ENCODE measurements at regions of chr3 and their contacts with region 1.

Region 1: GRCh38 chr3:632572-633170 is 436.1 kb downstream of the CHL1 start:
- DNase-seq: peak; percentile 73
- H3K4me3 Mint-ChIP-seq: no peak overlapping the region
- H3K27ac Mint-ChIP-seq: no peak overlapping the region
- H3K4me1 Mint-ChIP-seq: no peaks in the 10 kb centered on the region
- H3K27me3 Mint-ChIP-seq: no peaks in the 10 kb centered on the region
- CTCF ChIP-seq: peak; percentile 69

Region 2: DNA sequence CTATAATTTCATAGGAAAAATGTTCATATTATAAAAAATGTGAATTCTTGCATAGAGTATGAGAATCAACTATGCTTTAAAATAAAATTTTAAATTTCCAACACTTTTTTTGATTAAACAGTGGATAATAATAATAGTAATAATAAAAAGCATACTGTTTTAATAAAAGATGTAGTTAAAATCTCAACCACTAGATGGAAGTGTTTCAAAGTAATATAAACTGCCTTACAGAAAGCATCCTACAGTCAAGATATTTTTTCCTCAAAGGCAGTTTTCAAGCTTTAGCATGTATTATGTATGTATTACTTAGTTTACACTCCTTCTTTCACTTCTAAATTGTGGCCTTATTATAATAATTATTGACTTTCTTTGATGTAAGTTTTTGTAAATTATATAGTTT is 218.6 kb before region 1 on chr3:
- CTCF ChIA-PET with region 1: interaction called, 3 read pairs
- intact Hi-C with region 1: loop called (anchors 5 kb)
- DNase-seq: no peak
- H3K4me3 Mint-ChIP-seq: no peak overlapping the region
- H3K27ac Mint-ChIP-seq: no peak overlapping the region
- H3K4me1 Mint-ChIP-seq: no peaks in the 10 kb centered on the region
- H3K27me3 Mint-ChIP-seq: no peaks in the 10 kb centered on the region
- CTCF ChIP-seq: peak; percentile 16

Region 3: GRCh38 chr3:481680-482079 is 151.0 kb before region 1 on chr3:
- CTCF ChIA-PET with region 1: no interaction called
- intact Hi-C with region 1: loop called (anchors 5 kb)
- DNase-seq: peak; percentile 6
- H3K4me3 Mint-ChIP-seq: no peak overlapping the region
- H3K27ac Mint-ChIP-seq: no peak overlapping the region
- H3K4me1 Mint-ChIP-seq: no peaks in the 10 kb centered on the region
- H3K27me3 Mint-ChIP-seq: no peaks in the 10 kb centered on the region
- CTCF ChIP-seq: peak; percentile 33

Region 4: GRCh38 chr3:839981-840380 is 207.3 kb after region 1 on chr3:
- CTCF ChIA-PET with region 1: no interaction called
- intact Hi-C with region 1: loop called (anchors 5 kb)
- DNase-seq: no peak
- H3K4me3 Mint-ChIP-seq: no peak overlapping the region
- H3K27ac Mint-ChIP-seq: no peak overlapping the region
- H3K4me1 Mint-ChIP-seq: peaks cover 13% of the 10 kb centered on the region
- H3K27me3 Mint-ChIP-seq: no peaks in the 10 kb centered on the region
- CTCF ChIP-seq: no peak

Region 5: DNA sequence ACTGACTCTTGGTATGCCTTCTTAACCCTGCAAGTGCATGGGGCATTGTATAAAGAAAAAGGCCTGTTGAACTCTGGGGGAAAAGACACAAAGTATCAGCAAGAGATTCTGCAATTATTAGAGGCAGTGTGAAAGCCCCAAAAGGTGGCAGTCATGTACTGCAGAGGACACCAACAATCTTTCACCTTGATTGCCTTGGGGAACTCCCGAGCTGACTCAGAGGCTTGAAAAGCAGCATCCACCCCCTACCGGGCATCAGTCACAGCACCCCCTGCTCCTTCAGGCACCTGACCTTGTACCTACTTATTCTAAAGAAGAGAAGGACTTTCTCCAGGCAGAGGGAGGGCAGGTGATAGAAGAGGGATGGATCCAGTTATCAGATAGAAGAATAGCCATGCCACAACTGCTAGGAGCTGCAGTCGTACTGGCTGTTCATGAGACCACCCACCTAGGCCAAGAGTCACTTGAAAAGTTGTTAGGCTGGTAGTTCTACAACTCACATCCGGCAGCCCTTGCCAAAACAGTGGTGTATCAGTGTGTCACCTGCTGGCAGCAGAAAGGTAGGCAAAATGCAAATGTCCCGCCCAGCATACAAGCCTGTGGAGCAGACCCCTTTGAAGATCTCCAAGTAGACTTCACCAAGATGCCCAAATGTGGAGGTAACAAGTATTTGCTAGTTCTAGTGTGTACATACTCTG is 218.6 kb after region 1 on chr3:
- CTCF ChIA-PET with region 1: no interaction called
- intact Hi-C with region 1: loop called (anchors 1 kb)
- DNase-seq: peak; percentile 71
- H3K4me3 Mint-ChIP-seq: no peak overlapping the region
- H3K27ac Mint-ChIP-seq: no peak overlapping the region
- H3K4me1 Mint-ChIP-seq: peaks cover 12% of the 10 kb centered on the region
- H3K27me3 Mint-ChIP-seq: no peaks in the 10 kb centered on the region
- CTCF ChIP-seq: peak; percentile 36

Region 6: DNA sequence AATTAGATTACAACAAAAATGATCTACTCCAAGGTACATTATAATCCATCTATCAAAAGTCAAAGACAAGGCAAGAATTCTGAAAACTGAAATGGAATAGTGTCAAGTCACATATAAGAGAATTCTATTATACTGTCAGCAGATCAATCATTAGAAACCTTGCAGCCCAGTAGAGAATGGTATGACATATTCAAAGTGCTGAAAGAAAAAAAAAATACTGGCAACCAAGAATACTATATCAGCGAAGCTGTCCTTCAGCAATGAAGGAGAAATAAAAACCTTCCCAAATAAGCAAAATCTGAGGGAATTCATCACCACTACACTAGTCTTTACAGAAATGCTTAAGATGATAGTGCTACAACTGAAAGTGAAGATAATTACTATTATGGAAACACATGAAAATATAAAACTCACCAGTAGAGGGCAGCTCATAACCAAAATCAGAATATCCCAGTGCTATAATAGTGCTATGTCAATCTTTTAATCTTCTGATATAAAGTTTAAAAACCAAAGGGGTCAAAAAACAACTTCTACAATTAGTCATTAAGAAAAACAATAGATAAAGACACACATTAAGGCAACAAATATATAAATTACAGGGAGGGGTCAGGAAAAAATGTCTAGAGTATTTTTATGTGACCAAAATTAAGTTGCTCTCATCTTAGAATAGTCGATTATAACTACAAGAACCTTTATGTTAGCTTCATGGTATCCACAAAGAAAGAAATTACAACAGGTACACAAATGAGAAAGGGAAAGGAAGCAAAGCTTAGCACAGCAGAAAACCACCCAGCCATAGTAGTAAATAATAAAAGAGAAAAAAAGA is 269.5 kb after region 1 on chr3:
- CTCF ChIA-PET with region 1: no interaction called
- intact Hi-C with region 1: loop called (anchors 2 kb)
- DNase-seq: no peak
- H3K4me3 Mint-ChIP-seq: no peak overlapping the region
- H3K27ac Mint-ChIP-seq: no peak overlapping the region
- H3K4me1 Mint-ChIP-seq: no peaks in the 10 kb centered on the region
- H3K27me3 Mint-ChIP-seq: no peaks in the 10 kb centered on the region
- CTCF ChIP-seq: peak; percentile 24

Region 7: DNA sequence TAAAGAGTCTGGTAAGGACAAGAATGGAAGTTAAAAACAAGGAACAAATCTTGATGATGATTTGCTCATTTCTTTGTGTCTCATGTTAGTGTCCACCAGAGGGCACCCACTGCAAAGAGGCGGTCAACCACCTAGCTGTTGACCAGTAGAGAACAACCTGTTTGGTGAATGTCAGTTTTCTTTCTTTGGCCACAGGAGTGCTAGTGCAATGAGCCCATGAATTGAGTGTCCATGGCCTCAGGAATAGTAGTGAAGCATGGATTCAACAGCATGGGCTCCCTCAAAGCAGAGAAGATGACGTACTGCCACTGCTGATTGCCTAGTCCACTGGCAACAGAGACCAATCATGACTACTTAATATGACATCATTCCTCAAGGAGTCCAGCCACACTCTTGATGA is 449.4 kb after region 1 on chr3:
- CTCF ChIA-PET with region 1: no interaction called
- intact Hi-C with region 1: loop called (anchors 10 kb)
- DNase-seq: peak; percentile 71
- H3K4me3 Mint-ChIP-seq: no peak overlapping the region
- H3K27ac Mint-ChIP-seq: no peak overlapping the region
- H3K4me1 Mint-ChIP-seq: peaks cover 7% of the 10 kb centered on the region
- H3K27me3 Mint-ChIP-seq: no peaks in the 10 kb centered on the region
- CTCF ChIP-seq: peak; percentile 40